CD8-positive, alpha-beta T cell (primary cell): ENCODE measurements at regions of chr15 and their contacts with region 1.

Region 1: DNA sequence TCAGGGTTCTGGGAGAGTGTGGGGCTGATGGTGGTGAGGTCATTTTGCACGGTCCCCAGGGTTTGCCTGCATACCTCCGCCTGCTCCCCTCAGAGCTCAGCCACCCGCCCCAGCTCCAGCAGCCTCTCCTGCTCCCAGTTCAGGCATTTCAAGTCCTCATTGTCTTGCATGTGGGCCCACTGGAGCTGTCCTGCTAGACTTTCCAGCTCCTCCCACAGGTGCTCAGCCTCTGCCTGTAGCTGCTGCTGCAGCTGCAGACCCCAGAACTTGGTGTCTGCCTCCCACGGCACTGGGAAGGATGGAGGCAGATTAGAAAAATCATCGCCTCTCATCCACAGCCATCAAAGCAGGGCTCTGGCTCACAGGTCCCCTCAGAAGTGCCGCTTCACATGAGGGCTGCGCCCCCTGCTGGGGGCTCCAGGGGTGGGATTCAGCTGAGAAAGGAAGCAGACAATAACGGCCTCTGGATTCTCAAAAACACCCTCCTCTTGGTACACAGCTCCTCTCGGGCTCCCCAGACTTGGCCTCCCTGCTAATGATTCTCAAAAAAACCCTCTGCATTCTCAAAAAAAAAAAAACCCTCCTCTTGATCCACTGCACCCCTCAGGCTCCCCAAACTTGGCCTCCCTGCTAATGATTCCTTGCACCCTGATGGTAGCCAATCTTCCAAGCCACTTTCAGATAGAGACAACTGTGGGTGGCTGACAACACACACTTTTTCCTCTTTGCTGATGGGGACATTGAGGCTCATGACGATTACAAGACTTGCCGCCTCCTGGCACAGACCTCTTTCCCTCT is 89.3 kb upstream of the C2CD4B start:
- DNase-seq: peak; percentile 8 to 57 (median 48)
- ATAC-seq: no peak
- H3K4me3 ChIP-seq: no peak overlapping the region
- H3K4me3 Mint-ChIP-seq: no peak overlapping the region
- H3K27ac ChIP-seq: no peak overlapping the region
- H3K27ac Mint-ChIP-seq: no peak overlapping the region
- H3K4me1 ChIP-seq: no peaks in the 10 kb centered on the region
- H3K4me1 Mint-ChIP-seq: no peaks in the 10 kb centered on the region
- H3K27me3 ChIP-seq: no peaks in the 10 kb centered on the region
- H3K27me3 Mint-ChIP-seq: peaks cover 16% of the 10 kb centered on the region
- CTCF ChIP-seq: peak; percentile 54

Region 2: GRCh38 chr15:61871926-61872522 is 382.3 kb before region 1 on chr15:
- CTCF ChIA-PET with region 1: no interaction called
- POLR2A ChIA-PET with region 1: no interaction called
- intact Hi-C with region 1: loop called in 1 of 2 experiments (anchors 10 kb)
- DNase-seq: peak in 2 of 9 experiments; percentile 7 to 27
- ATAC-seq: no peak
- H3K4me3 ChIP-seq: no peak overlapping the region
- H3K4me3 Mint-ChIP-seq: no peak overlapping the region
- H3K27ac ChIP-seq: no peak overlapping the region
- H3K27ac Mint-ChIP-seq: no peak overlapping the region
- H3K4me1 ChIP-seq: no peaks in the 10 kb centered on the region
- H3K4me1 Mint-ChIP-seq: no peaks in the 10 kb centered on the region
- H3K27me3 ChIP-seq: no peaks in the 10 kb centered on the region
- H3K27me3 Mint-ChIP-seq: no peaks in the 10 kb centered on the region
- CTCF ChIP-seq: peak; percentile 66

Region 3: DNA sequence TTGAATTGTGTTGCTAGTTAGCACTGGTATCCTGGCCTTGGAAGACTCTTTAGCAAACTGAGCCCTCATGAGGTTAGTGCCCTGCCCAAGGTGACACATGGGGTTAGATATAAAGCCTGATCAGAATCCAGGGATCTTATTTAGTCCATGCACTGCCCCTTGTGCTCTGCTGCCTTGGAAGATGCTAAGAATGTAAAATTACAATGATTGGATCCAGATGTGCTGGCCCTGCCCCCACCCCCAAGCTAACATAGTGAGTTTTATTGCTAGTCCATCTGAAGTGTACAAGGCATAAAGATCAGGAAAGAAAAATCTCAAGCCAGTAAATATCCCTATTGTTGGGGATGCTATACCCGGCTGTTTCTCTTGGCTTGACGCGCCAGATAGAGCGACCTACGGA is 158.8 kb after region 1 on chr15:
- CTCF ChIA-PET with region 1: no interaction called
- POLR2A ChIA-PET with region 1: no interaction called
- intact Hi-C with region 1: no loop called
- DNase-seq: no peak
- ATAC-seq: no peak
- H3K4me3 ChIP-seq: no peak overlapping the region
- H3K4me3 Mint-ChIP-seq: no peak overlapping the region
- H3K27ac ChIP-seq: no peak overlapping the region
- H3K27ac Mint-ChIP-seq: no peak overlapping the region
- H3K4me1 ChIP-seq: no peaks in the 10 kb centered on the region
- H3K4me1 Mint-ChIP-seq: no peaks in the 10 kb centered on the region
- H3K27me3 ChIP-seq: no peaks in the 10 kb centered on the region
- H3K27me3 Mint-ChIP-seq: peaks cover 14% of the 10 kb centered on the region
- CTCF ChIP-seq: no peak

Region 4: DNA sequence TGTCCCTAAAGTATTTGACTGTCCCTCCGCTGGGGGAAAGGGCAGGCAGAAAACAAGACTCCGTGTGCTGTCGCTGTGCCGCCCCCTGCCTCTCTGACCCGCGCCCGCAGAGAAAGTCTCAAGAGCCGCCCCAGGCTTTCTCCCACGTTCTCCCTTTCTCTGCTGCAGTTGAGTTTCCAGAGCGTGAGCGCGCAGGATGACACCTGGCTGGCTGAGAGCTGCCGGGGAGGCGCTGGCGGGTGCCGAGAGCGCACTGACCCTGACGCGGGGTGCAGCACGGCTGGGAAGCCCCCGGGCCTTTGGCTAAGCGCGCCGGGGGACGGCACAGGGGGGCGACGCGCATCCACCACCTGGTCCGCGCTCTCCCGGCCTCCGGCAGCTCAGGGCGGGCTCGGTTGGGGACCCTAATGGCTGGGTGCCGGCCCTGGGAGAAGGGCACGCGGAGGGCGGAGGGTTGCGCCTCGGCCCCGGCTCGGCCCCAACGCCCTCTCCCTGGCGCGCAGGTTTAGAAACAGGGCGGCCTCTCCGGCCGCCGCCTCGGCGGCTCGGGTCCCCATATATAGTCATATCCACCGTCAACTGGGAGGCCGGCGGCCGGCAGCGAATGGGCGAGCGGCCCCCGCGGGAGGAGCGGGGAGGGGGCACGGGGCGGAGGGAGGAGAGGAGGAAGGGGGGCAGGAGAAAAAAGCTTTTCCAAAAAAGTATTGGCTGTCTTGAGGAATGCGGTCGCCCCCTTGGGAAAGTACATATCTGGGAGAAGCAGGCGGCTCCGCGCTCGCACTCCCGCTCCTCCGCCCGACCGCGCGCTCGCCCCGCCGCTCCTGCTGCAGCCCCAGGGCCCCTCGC is 787.9 kb after region 1 on chr15 and contains the start of gene TPM1:
- CTCF ChIA-PET with region 1: no interaction called
- POLR2A ChIA-PET with region 1: no interaction called
- intact Hi-C with region 1: no loop called
- DNase-seq: peak in 2 of 9 experiments; percentile 13
- ATAC-seq: no peak
- H3K4me3 ChIP-seq: peak within 1 kb of the TSS in 1 of 2 experiments; percentile 26
- H3K4me3 Mint-ChIP-seq: peak within 1 kb of the TSS; percentile 70
- H3K27ac ChIP-seq: no peak within 1 kb of the TSS
- H3K27ac Mint-ChIP-seq: no peak within 1 kb of the TSS
- H3K4me1 ChIP-seq: peaks cover 13% of the 10 kb centered on the region
- H3K4me1 Mint-ChIP-seq: peaks cover 12% of the 10 kb centered on the region
- H3K27me3 ChIP-seq: peaks cover 20 to 32% of the 10 kb centered on the region in 2 experiments
- H3K27me3 Mint-ChIP-seq: peaks cover 61% of the 10 kb centered on the region
- CTCF ChIP-seq: no peak
- total RNA-seq, gene TPM1: 8.6 to 9.4 TPM